IMR-90 (cell line): ENCODE measurements at regions of chr5 and their contacts with region 1.

Region 1: DNA sequence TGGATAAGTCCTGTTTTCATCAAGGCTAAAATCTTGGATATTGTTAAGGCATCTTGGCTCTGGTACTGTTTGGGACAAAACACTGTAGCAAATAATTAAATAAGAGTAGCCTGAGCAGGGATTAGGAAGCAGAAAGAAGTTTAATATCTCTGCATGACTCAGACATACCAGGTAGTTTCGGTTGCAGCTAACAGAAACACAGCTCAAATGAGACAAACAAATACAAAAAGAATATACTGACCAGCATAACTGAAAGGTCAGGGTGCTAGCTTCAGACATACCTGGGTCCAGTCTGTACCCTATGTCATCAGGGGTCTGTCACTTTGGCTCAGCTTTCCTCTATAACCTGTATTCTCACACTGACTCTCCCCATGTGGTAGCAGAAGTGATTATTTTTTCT is 156.4 kb upstream of the MAP3K1 start:
- DNase-seq: no peak
- ATAC-seq: peak; percentile 24; the same call in 1 of the 2 replicates
- H3K4me3 ChIP-seq: no peak overlapping the region
- H3K27ac ChIP-seq: no peak overlapping the region
- H3K4me1 ChIP-seq: peaks cover 8% of the 10 kb centered on the region; the same call in 1 of the 2 replicates
- H3K27me3 ChIP-seq: peaks cover 4% of the 10 kb centered on the region
- CTCF ChIP-seq: no peak
- POLR2A ChIP-seq: no peak
- RAD21 ChIP-seq: no peak

Region 2: GRCh38 chr5:56596155-56596554 is 62.8 kb before region 1 on chr5:
- CTCF ChIA-PET with region 1: no interaction called
- POLR2A ChIA-PET with region 1: no interaction called
- dilution Hi-C with region 1: no loop called
- in situ Hi-C with region 1: no loop called
- intact Hi-C with region 1: loop called (anchors 2 kb)
- DNase-seq: no peak
- ATAC-seq: no peak
- H3K4me3 ChIP-seq: no peak overlapping the region
- H3K27ac ChIP-seq: no peak overlapping the region
- H3K4me1 ChIP-seq: no peaks in the 10 kb centered on the region
- H3K27me3 ChIP-seq: peaks cover 9% of the 10 kb centered on the region
- CTCF ChIP-seq: no peak
- POLR2A ChIP-seq: no peak
- RAD21 ChIP-seq: no peak